BJ (cell line): ENCODE measurements at regions of chr17 and their contacts with region 1.

Region 1: DNA sequence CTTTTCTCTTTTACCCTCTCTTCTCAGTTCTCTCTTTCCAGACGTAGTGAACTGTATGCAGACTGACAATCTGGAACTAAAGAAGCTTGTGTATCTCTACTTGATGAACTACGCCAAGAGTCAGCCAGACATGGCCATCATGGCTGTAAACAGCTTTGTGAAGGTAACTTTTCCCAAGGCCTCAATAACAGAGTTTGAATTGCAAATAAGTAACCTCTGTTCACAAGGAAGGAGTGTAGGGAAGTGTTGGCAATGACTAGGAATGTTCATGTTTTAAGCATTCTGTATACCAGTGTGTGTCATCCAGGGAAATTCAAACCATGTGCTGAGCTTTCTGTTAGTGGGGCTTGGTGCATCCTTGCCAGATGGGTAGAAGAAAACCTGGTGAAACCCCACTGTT is 18.6 kb downstream of the AP2B1 start:
- DNase-seq: peak; percentile 31
- H3K4me3 ChIP-seq: no peak overlapping the region
- H3K27me3 ChIP-seq: no peaks in the 10 kb centered on the region
- CTCF ChIP-seq: no peak

Region 2: GRCh38 chr17:35555695-35556094 is 50.0 kb before region 1 on chr17:
- CTCF ChIA-PET with region 1: no interaction called
- POLR2A ChIA-PET with region 1: no interaction called
- DNase-seq: no peak
- H3K4me3 ChIP-seq: no peak overlapping the region
- H3K27me3 ChIP-seq: peaks cover 4% of the 10 kb centered on the region; the same call in 1 of the 2 replicates
- CTCF ChIP-seq: peak; percentile 18; the same call in 1 of the 2 replicates

Region 3: GRCh38 chr17:35816723-35817122 is 211.0 kb after region 1 on chr17:
- CTCF ChIA-PET with region 1: no interaction called
- POLR2A ChIA-PET with region 1: interaction called, 15 read pairs
- DNase-seq: no peak
- H3K4me3 ChIP-seq: no peak overlapping the region
- H3K27me3 ChIP-seq: no peaks in the 10 kb centered on the region
- CTCF ChIP-seq: no peak